Activated CD4-positive, alpha-beta T cell treated with anti-CD3 and anti-CD28 coated beads, Interleukin-2, amount 10 ng/mL, durations not matched to agents 7 days and 5 days (primary cell): ENCODE measurements at regions of chr19 and their contacts with region 1.

Region 1: DNA sequence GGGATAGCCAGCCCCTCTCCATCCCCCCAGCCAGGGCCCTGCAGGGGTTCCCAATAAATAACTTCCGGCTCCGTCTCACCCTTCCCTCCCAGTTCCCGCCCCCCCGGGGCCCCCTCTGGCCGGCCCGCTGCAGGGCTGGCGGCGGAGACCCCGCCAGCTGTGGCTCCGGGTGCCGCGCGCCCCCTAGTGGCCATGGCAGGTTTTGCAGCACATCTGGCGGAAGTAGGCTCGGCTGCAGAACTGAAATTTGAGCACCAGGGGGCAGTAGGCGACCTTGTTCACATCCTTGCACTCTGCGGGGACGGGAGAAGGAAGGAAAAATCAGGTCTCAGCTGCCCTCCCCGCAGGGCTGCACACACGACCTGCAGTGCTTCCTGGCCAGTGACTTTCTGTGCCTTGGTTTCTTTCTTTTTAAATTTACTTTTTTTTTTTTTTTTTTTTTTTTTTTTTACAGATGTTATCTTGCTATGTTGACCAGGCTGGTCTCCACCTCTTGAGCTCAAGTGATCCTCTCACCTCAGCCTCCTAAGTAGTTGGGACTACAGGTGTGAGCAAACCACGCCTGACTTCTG is 3.6 kb upstream of the MYO1F start:
- DNase-seq: peak; percentile 88
- H3K4me3 Mint-ChIP-seq: no peak overlapping the region
- H3K27ac Mint-ChIP-seq: no peak overlapping the region
- H3K4me1 Mint-ChIP-seq: peaks cover 34% of the 10 kb centered on the region
- H3K27me3 Mint-ChIP-seq: peaks cover 3% of the 10 kb centered on the region

Region 2: GRCh38 chr19:8412783-8413628 is 167.8 kb before region 1 on chr19 and contains the start of gene MARCHF2:
- CTCF ChIA-PET with region 1: interaction called, 34 read pairs
- POLR2A ChIA-PET with region 1: no interaction called
- DNase-seq: peak; percentile 95
- H3K4me3 Mint-ChIP-seq: peak within 1 kb of the TSS; percentile 67
- H3K27ac Mint-ChIP-seq: peak within 1 kb of the TSS; percentile 77
- H3K4me1 Mint-ChIP-seq: peaks cover 13% of the 10 kb centered on the region
- H3K27me3 Mint-ChIP-seq: no peaks in the 10 kb centered on the region
- total RNA-seq, gene MARCHF2: 26.4 to 29.0 TPM

Region 3: DNA sequence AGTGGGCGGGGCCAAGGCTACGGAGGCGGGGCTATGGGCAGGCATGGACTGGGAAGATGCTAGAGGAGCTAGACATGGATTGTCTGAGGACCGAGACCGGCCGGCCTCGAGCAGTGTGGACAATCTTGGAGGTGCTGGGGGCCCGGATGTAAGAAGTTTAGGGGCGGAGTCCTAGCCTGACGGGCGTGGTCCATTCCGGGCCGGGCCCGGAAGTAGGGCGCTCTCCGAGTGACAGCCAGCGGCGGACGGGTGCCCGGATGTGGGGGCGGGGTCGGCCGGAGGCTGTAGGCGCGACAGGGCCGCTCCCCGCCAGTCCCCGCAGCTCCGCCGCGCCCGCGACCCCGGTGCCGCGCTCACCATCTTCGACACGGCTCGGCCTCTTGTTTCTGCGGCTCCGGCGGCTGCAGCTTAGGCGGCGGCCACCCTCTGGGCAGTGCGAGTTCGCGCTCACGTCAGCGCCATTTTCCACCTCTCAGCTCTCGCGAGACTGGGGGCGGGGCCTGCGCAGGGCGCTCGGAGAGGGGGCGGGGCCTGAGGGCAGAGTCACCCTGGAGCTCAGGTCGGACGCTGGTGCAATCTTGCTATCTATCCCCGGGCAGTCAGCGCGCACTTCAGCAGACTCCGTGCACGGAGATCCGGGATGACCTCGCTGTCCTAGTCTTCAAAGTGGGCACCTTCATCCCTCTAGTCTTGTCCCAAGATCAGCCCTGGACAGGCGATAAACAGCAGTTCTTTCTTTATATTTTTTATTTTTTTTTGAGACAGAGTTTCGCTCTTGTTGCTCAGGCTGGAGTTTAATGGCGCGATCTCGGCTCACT is 66.9 kb before region 1 on chr19 and contains the start of gene ZNF414:
- CTCF ChIA-PET with region 1: interaction called, 45 read pairs
- POLR2A ChIA-PET with region 1: interaction called, 5 read pairs
- DNase-seq: peak; percentile 95
- H3K4me3 Mint-ChIP-seq: peak within 1 kb of the TSS; percentile 91
- H3K27ac Mint-ChIP-seq: peak within 1 kb of the TSS; percentile 97
- H3K4me1 Mint-ChIP-seq: peaks cover 59% of the 10 kb centered on the region
- H3K27me3 Mint-ChIP-seq: no peaks in the 10 kb centered on the region
- total RNA-seq, gene ZNF414: 46.8 to 47.3 TPM

Region 4: DNA sequence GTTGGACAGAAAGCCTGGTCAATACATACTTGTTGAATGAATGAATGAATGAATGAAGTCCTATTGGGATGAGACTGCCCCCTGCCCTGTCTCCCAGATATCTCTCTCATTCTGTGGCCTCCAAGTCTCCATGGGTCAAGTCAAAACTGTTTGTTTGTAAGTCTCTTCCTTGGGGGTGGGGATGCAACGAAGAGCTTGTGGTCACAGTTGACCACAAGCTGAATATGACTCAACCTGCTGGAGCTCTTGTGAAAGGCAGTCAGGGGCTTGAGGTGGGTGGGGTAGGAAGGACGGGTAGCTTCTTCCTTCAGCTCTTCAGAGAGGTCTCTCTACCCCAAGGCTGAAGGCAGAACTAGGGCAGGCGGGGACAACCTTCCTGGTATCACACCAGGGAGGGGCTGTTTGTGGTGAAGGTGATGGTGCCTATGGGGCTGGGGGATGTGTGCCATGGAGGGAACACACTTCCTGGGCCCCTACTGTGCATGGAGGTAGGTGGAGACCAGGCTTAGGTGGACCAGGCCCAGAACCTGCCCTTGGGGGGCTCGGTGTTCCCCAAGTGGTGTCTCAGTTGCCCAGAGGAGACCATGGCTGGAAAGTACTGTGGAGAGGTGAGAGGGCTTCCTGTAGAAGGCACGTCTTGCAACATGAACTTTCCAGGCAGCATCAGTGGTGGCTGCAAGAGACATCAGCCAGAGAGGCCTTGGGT is 11.6 kb before region 1 on chr19:
- CTCF ChIA-PET with region 1: interaction called, 70 read pairs
- POLR2A ChIA-PET with region 1: interaction called, 5 read pairs
- DNase-seq: peak; percentile 87
- H3K4me3 Mint-ChIP-seq: peak overlapping the region; percentile 93
- H3K27ac Mint-ChIP-seq: peak overlapping the region; percentile 91
- H3K4me1 Mint-ChIP-seq: peaks cover 79% of the 10 kb centered on the region
- H3K27me3 Mint-ChIP-seq: no peaks in the 10 kb centered on the region

Region 5: GRCh38 chr19:8638078-8638619 is 57.4 kb after region 1 on chr19:
- CTCF ChIA-PET with region 1: no interaction called
- POLR2A ChIA-PET with region 1: no interaction called
- DNase-seq: no peak
- H3K4me3 Mint-ChIP-seq: no peak overlapping the region
- H3K27ac Mint-ChIP-seq: no peak overlapping the region
- H3K4me1 Mint-ChIP-seq: peaks cover 5% of the 10 kb centered on the region
- H3K27me3 Mint-ChIP-seq: peaks cover 25% of the 10 kb centered on the region